ENCODE measurements at regions of chr3 and their contacts with region 1.

Region 1: DNA sequence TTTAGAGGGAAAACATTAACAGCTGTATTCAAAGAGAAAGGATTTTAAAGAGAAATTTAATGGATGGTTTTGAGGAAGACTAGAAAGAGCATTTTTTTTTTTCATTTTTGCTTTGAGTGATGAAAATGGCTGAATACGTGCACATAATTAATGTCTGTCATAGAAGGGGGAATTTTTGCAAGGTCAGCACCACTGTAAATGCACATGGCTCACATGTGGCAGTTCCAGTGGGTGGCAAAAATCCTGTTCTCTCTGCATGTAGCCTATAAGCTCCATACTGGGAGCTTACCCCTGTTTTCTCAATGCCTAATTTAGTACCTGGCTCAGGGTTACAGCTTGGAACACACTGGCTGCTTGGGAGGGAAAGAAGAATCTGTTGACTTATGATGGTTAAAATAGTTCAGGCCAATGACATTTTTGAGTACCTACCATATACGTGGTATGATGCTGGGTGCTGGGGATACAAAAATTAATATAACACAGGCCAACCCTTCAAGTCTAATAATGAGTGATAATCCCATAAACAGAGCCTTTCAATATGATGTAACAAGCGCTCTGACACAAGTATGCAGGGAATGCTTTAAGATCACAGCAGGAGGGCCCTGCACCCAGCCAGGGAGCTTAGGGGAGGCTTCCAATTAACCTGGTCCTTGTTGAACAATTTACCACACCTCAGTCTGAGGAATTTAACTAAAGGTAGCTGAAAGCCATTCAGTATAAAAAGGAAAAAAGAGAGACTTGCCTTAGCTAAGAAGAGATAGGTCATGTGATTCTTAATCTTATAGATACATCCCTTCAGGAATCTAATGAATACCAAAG is 33.0 kb downstream of the HSPBAP1 start:
- DNase-seq: peak; percentile 72
- ATAC-seq: peak; percentile 89
- H3K4me3 Mint-ChIP-seq: no peak overlapping the region
- H3K27ac Mint-ChIP-seq: peak overlapping the region; percentile 47
- H3K4me1 Mint-ChIP-seq: peaks cover 13% of the 10 kb centered on the region
- H3K27me3 Mint-ChIP-seq: no peaks in the 10 kb centered on the region
- CTCF ChIP-seq: no peak

Region 2: DNA sequence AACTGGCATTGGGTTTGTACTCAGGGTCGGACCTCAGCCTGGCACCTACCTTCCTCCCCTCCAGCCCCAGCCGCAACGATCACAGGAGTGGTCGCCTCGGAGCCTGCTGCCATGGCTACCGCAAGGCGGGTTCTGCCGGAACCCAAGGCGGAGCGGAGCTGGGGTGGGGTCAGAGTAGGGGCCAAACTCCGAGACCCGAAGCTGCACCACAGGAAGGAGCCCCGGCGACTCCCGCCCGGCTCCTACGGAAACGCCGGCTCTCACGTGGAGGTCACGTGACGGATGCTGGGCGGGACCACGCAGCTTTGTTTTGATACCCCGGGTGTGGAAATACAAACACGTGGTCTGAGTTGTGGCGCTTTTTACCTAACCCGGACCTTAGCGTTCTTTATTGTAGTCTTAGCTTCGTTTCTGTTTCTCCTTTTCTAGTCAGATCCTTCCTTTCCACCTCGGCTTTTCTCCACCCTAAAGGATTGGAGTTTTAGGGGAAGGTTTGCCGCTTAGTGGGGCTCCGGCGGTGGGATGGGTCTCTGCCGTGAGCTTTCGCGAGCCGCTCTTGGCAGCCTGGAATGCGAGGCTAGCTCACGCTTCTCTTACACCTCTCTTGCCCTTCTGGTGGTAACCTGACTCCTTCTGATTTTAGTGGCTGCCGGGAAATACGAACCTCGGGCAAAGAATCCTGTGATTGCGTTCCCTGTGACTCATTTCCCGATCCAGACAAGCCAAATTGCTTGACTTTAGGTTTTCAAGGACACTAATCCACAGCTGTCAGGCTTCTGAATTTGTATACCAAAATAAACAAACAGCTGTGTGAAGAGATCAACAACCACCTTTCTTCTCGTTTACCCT is 33.1 kb after region 1 on chr3 and contains the start of gene HSPBAP1:
- CTCF ChIA-PET with region 1: no interaction called
- POLR2A ChIA-PET with region 1: interaction called, 10 read pairs
- DNase-seq: peak; percentile 92
- ATAC-seq: peak; percentile 83
- H3K4me3 Mint-ChIP-seq: peak within 1 kb of the TSS; percentile 81
- H3K27ac Mint-ChIP-seq: peak within 1 kb of the TSS; percentile 99
- H3K4me1 Mint-ChIP-seq: peaks cover 18% of the 10 kb centered on the region
- H3K27me3 Mint-ChIP-seq: peaks cover 9% of the 10 kb centered on the region
- CTCF ChIP-seq: no peak
- total RNA-seq, gene HSPBAP1: 7.6 to 10.4 TPM (median 9.1 TPM) in 3 replicates

Measured in WTC11 (cell line).